ENCODE measurements at regions of chr2 and their contacts with region 1.

Region 1: GRCh38 chr2:218568190-218569037 is at the starts of genes CNOT9 and USP37:
- DNase-seq: peak; percentile 100
- ATAC-seq: peak; percentile 92
- H3K4me3 Mint-ChIP-seq: peak within 1 kb of the TSS; percentile 97
- H3K27ac Mint-ChIP-seq: peak within 1 kb of the TSS; percentile 99
- H3K4me1 Mint-ChIP-seq: peaks cover 45% of the 10 kb centered on the region
- H3K27me3 Mint-ChIP-seq: no peaks in the 10 kb centered on the region
- CTCF ChIP-seq: no peak
- total RNA-seq, gene CNOT9: 60.5 and 74.4 TPM in 2 replicates
- total RNA-seq, gene USP37: 14.3 and 23.1 TPM in 2 replicates

Region 2: DNA sequence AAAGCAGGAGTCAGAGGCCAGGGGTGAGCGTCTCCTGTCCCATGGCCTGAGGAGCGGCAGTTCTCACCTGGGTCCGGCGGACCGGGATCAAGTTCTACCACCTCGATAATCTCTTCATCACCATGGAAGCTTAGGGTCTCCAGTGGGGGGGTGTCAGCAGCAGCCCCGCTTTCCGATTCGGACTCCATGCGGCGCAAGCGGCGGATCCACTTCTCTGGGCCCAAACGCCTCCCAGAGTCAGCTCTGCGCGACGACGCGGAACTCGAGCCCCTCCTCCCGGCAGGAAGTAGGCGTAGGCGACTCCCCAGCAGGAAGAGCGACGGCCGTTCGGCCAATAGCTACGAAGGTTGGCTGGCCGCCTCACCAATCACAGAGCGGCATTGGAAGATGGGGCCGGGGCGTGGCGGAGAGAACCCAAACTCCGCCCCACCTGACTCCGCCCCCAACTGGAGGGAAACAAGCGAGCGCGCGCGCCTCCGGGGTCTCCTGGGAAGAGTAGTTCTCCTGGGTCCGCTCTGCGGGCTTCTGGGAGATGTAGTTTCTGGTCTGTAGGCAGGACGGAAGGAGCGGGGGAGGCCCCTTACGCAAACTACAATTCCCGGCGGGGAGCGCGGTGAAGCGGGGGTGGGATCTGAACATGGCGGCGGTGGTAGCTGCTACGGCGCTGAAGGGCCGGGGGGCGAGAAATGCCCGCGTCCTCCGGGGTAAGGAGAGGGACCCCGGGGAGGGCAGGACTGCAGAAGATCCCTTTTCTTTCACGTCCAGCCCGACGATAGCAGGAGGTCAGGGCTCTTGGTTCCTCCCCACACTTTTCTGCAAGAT is 298.3 kb before region 1 on chr2 and contains the starts of genes AAMP and PNKD:
- CTCF ChIA-PET with region 1: no interaction called
- POLR2A ChIA-PET with region 1: no interaction called
- intact Hi-C with region 1: loop called (anchors 1 kb)
- DNase-seq: peak; percentile 100
- ATAC-seq: peak; percentile 83
- H3K4me3 Mint-ChIP-seq: peak within 1 kb of the TSS; percentile 93
- H3K27ac Mint-ChIP-seq: peak within 1 kb of the TSS; percentile 88
- H3K4me1 Mint-ChIP-seq: peaks cover 67% of the 10 kb centered on the region
- H3K27me3 Mint-ChIP-seq: no peaks in the 10 kb centered on the region
- CTCF ChIP-seq: no peak
- total RNA-seq, gene AAMP: 63.4 and 63.6 TPM in 2 replicates
- total RNA-seq, gene PNKD: 21.0 and 23.7 TPM in 2 replicates

Region 3: DNA sequence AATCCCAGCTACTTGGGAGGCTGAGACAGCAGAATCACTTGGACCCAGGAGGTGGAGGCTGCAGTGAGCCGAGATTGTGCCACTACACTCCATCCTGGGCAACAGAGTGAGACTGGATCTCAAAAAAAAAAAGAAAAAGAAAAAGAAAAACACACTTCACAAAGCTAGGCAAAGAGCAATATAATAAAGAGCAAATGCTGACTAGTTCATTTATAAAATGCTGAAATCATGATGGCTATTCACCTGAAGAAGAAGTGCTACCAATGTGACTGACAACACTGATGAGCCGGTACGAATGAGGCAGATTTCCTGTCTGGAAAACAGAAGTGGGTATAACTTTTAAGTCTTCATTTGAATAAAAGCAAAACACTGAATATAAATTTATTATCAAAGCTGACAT is 111.6 kb before region 1 on chr2:
- CTCF ChIA-PET with region 1: no interaction called
- POLR2A ChIA-PET with region 1: no interaction called
- intact Hi-C with region 1: no loop called
- DNase-seq: no peak
- ATAC-seq: no peak
- H3K4me3 Mint-ChIP-seq: no peak overlapping the region
- H3K27ac Mint-ChIP-seq: no peak overlapping the region
- H3K4me1 Mint-ChIP-seq: peaks cover 7% of the 10 kb centered on the region
- H3K27me3 Mint-ChIP-seq: no peaks in the 10 kb centered on the region
- CTCF ChIP-seq: no peak

Region 4: GRCh38 chr2:218471982-218472381 is 96.4 kb before region 1 on chr2:
- CTCF ChIA-PET with region 1: no interaction called
- POLR2A ChIA-PET with region 1: interaction called, 4 read pairs
- intact Hi-C with region 1: loop called (anchors 10 kb)
- DNase-seq: no peak
- ATAC-seq: peak; percentile 10
- H3K4me3 Mint-ChIP-seq: no peak overlapping the region
- H3K27ac Mint-ChIP-seq: peak overlapping the region; percentile 89
- H3K4me1 Mint-ChIP-seq: peaks cover 36% of the 10 kb centered on the region
- H3K27me3 Mint-ChIP-seq: no peaks in the 10 kb centered on the region
- CTCF ChIP-seq: no peak

Region 5: DNA sequence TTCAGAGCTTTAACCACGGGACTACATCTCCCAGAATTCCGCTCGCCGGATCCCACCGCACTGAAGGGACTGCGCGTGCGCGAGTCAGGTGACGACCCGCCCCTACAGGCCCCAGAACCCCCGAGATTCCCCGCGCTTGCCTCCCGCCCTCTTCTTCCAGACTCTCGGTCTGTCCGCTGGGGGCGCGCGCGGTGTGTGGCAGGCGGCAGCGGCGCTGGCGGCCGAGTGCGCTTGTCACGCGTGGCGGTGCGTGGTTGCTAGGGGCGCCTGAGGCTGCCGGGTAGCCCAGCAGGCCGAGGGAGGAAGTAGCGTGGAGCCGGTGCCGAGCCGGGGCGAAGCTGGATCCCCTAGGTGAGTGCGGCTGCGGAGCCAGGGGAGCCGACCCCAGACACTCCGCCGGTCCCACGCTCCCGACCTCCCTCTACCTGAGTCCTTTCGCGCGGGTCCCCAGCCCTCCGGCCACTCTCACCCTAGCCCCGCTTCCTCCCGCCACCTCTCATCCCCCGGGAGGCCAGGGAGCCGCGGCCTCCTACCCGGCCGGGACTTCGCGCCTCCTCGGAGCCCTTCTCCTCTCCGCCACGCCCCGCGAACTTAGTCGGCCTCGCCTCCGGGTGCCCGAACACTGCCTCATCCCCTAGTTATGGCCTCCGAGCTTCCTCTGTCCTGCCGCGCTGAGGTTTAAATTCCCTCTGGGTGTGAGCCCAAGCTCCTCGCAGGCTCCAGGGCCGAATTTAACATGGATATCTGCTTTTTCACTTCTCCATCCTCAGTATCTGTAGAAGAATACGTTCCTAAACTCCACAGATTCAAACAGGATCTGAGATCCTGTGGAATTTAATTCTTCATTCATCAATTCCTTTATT is 142.5 kb after region 1 on chr2 and contains the start of gene TTLL4:
- CTCF ChIA-PET with region 1: no interaction called
- POLR2A ChIA-PET with region 1: interaction called, 4 read pairs
- intact Hi-C with region 1: loop called (anchors 1 kb)
- DNase-seq: peak; percentile 98
- ATAC-seq: peak; percentile 97
- H3K4me3 Mint-ChIP-seq: peak within 1 kb of the TSS; percentile 91
- H3K27ac Mint-ChIP-seq: peak within 1 kb of the TSS; percentile 86
- H3K4me1 Mint-ChIP-seq: peaks cover 26% of the 10 kb centered on the region
- H3K27me3 Mint-ChIP-seq: no peaks in the 10 kb centered on the region
- CTCF ChIP-seq: no peak
- total RNA-seq, gene TTLL4: 36.0 and 37.2 TPM in 2 replicates

Region 6: GRCh38 chr2:219253753-219254590 is 685.6 kb after region 1 on chr2 and contains the start of gene TUBA4A:
- CTCF ChIA-PET with region 1: no interaction called
- POLR2A ChIA-PET with region 1: no interaction called
- intact Hi-C with region 1: loop called (anchors 1 kb)
- DNase-seq: peak; percentile 90
- ATAC-seq: peak; percentile 69
- H3K4me3 Mint-ChIP-seq: peak within 1 kb of the TSS; percentile 82
- H3K27ac Mint-ChIP-seq: peak within 1 kb of the TSS; percentile 98
- H3K4me1 Mint-ChIP-seq: peaks cover 53% of the 10 kb centered on the region
- H3K27me3 Mint-ChIP-seq: no peaks in the 10 kb centered on the region
- CTCF ChIP-seq: no peak
- total RNA-seq, gene TUBA4A: 184 and 192 TPM in 2 replicates

Measured in activated B cell treated with CpG ODN at 0.5 μM for 24 hours (primary cell).